ENCODE measurements at regions of chr4 and their contacts with region 1.

Region 1: GRCh38 chr4:89294573-89295269 is 12.9 kb downstream of the GPRIN3 start:
- DNase-seq: peak in 4 of 10 donors; percentile 48 to 86 (median 75)
- ATAC-seq: peak; percentile 76 to 83
- H3K4me3 Mint-ChIP-seq: peak overlapping the region; percentile 20 to 79 (median 66)
- H3K27ac Mint-ChIP-seq: peak overlapping the region; percentile 82 to 96 (median 90)
- H3K4me1 Mint-ChIP-seq: peaks cover 34 to 89% (median 83%) of the 10 kb centered on the region in 4 donors
- H3K27me3 Mint-ChIP-seq: peaks cover 0 to 1% (median 0%) of the 10 kb centered on the region in 5 donors

Region 2: GRCh38 chr4:89283226-89284009 is 11.3 kb before region 1 on chr4:
- POLR2A ChIA-PET with region 1: interaction called, 19 read pairs
- DNase-seq: peak in 6 of 10 donors; percentile 29 to 75 (median 54)
- ATAC-seq: peak; percentile 73 to 90
- H3K4me3 Mint-ChIP-seq: peak overlapping the region; percentile 16 to 84 (median 49)
- H3K27ac Mint-ChIP-seq: peak overlapping the region; percentile 75 to 98 (median 92)
- H3K4me1 Mint-ChIP-seq: peaks cover 27 to 65% (median 55%) of the 10 kb centered on the region in 4 donors
- H3K27me3 Mint-ChIP-seq: no peaks in the 10 kb centered on the region

Region 3: DNA sequence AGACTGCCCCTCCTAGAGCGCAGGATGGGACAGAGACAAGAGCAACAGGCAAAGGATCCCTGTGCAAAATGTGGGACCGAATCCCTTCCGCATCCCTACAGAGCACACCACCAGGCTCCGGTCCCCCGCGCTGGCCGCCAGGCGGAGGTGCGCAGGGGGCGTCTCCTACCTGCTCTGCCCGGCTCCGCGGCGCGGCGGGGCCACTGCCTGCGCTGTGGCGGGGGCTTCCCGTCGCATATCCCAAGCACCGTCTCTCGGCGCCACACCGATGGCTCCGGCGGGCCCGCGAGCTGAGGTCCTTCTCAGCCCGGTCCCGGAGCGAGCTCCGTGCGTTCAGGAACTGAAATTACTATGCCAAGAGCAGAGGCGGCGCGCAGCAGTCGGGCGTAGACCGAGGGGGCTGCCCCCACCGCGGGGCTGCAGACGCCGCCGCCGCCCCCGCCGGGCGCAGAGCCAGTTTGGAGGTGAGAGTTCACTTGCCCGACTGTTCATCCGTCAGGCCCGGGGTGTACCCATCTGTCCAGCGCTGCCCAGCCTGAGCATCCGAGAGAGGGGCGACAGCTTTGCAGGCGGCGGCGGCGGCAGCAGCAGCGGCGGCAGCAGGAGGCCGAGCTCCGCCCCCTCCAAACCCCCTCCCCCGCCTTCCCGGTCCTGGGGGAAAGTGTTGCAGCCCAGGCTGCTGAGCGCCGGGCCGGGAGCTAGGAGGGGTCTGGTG is 12.9 kb after region 1 on chr4 and contains the start of gene GPRIN3:
- POLR2A ChIA-PET with region 1: interaction called, 22 read pairs
- DNase-seq: peak; percentile 50 to 77 (median 60)
- ATAC-seq: peak; percentile 80 to 81
- H3K4me3 Mint-ChIP-seq: peak within 1 kb of the TSS; percentile 82 to 99 (median 92)
- H3K27ac Mint-ChIP-seq: peak within 1 kb of the TSS; percentile 79 to 96 (median 88)
- H3K4me1 Mint-ChIP-seq: peaks cover 27 to 62% (median 53%) of the 10 kb centered on the region in 4 donors
- H3K27me3 Mint-ChIP-seq: no peaks in the 10 kb centered on the region
- polyA plus RNA-seq, gene GPRIN3: 3.3 to 3.7 (median 3.4) TPM

Region 4: DNA sequence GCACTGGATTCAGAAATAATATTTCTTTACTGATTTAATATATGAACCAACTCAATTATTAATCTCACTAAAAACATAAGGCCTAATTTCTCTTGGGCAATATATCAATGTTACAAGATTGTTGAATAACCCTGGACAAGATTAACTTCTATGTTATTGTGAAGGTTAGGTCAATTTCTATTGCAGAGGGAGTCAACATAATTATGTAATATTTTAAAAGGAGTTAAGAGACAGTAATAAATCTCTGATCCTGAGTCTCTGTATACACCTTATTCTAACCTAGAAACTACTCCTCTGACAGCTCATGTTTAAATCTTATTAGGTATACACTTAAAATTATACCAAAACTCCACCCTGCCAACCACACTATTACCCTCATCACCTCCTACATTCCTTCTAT is 27.9 kb after region 1 on chr4:
- POLR2A ChIA-PET with region 1: no interaction called
- DNase-seq: no peak
- ATAC-seq: no peak
- H3K4me3 Mint-ChIP-seq: no peak overlapping the region
- H3K27ac Mint-ChIP-seq: no peak overlapping the region
- H3K4me1 Mint-ChIP-seq: peaks cover 0 to 19% (median 3%) of the 10 kb centered on the region in 4 donors
- H3K27me3 Mint-ChIP-seq: no peaks in the 10 kb centered on the region

Measured in naive thymus-derived CD8-positive, alpha-beta T cell (primary cell).